Activated naive CD4-positive, alpha-beta T cell treated with anti-CD3 and anti-CD28 coated beads, Interleukin-2, amount 10 ng/mL, durations not matched to agents 7 days and 5 days (primary cell): ENCODE measurements at regions of chr9 and their contacts with region 1.

Region 1: GRCh38 chr9:99184475-99185347 is 37.0 kb downstream of the ALG2 start:
- DNase-seq: peak; percentile 85
- H3K4me3 Mint-ChIP-seq: no peak overlapping the region
- H3K27ac Mint-ChIP-seq: no peak overlapping the region
- H3K4me1 Mint-ChIP-seq: peaks cover 42% of the 10 kb centered on the region
- H3K27me3 Mint-ChIP-seq: peaks cover 13% of the 10 kb centered on the region

Region 2: GRCh38 chr9:99162759-99163364 is 21.8 kb before region 1 on chr9:
- CTCF ChIA-PET with region 1: interaction called, 19 read pairs
- DNase-seq: no peak
- H3K4me3 Mint-ChIP-seq: no peak overlapping the region
- H3K27ac Mint-ChIP-seq: no peak overlapping the region
- H3K4me1 Mint-ChIP-seq: peaks cover 32% of the 10 kb centered on the region
- H3K27me3 Mint-ChIP-seq: peaks cover 27% of the 10 kb centered on the region

Region 3: GRCh38 chr9:99326112-99326916 is 141.6 kb after region 1 on chr9:
- CTCF ChIA-PET with region 1: no interaction called
- DNase-seq: no peak
- H3K4me3 Mint-ChIP-seq: no peak overlapping the region
- H3K27ac Mint-ChIP-seq: no peak overlapping the region
- H3K4me1 Mint-ChIP-seq: no peaks in the 10 kb centered on the region
- H3K27me3 Mint-ChIP-seq: peaks cover 13% of the 10 kb centered on the region